Dendritic cell treated with granulocyte-macrophage colony-stimulating factor and Interleukin-4, amounts not matched to agents 40 ng/mL and 50 ng/mL, for 4 days (primary cell): ENCODE measurements at regions of chr12 and their contacts with region 1.

Region 1: GRCh38 chr12:132687208-132688164 is at the starts of genes POLE and PXMP2:
- H3K4me3 Mint-ChIP-seq: peak within 1 kb of the TSS; percentile 85
- H3K27ac Mint-ChIP-seq: peak within 1 kb of the TSS; percentile 78
- H3K4me1 Mint-ChIP-seq: peaks cover 22% of the 10 kb centered on the region
- H3K27me3 Mint-ChIP-seq: peaks cover 8% of the 10 kb centered on the region

Region 2: DNA sequence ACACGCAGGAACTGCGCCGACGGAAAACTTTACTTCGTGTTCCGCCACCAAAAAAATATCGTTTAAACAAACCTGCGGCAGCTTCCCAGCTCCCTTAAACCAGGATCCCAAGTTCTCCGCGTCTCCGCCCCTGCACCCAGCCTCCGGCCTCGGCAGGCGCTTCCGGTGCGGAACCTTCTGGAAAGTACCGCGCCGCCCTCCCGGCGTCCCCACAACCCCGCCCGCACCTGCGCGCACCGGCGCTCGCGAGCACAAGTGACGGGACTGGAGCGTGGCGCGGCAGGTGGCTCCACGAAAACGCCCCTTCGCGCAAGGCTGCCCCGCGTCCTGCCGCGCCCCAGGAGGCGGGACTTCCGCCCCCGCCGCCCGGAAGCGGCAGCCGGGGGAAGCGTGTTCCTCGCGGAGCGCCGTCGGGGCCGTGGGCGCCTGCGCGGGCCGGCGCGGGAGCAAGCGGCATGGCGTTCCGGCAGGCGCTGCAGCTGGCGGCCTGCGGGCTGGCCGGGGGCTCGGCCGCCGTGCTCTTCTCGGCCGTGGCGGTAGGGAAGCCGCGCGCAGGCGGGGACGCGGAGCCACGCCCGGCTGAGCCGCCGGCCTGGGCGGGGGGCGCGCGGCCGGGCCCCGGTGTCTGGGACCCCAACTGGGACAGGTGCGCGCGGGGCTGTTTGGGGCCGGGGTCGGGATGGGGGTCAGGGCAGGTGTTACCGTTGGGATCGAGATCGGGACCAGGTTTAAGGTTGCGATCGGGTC is 23.1 kb after region 1 on chr12 and contains the start of gene PGAM5:
- intact Hi-C with region 1: loop called (anchors 2 kb)
- H3K4me3 Mint-ChIP-seq: peak within 1 kb of the TSS; percentile 94
- H3K27ac Mint-ChIP-seq: peak within 1 kb of the TSS; percentile 87
- H3K4me1 Mint-ChIP-seq: peaks cover 23% of the 10 kb centered on the region
- H3K27me3 Mint-ChIP-seq: no peaks in the 10 kb centered on the region

Region 3: GRCh38 chr12:132739600-132740312 is 52.3 kb after region 1 on chr12:
- intact Hi-C with region 1: no loop called
- H3K4me3 Mint-ChIP-seq: no peak overlapping the region
- H3K27ac Mint-ChIP-seq: no peak overlapping the region
- H3K4me1 Mint-ChIP-seq: no peaks in the 10 kb centered on the region
- H3K27me3 Mint-ChIP-seq: no peaks in the 10 kb centered on the region

Region 4: DNA sequence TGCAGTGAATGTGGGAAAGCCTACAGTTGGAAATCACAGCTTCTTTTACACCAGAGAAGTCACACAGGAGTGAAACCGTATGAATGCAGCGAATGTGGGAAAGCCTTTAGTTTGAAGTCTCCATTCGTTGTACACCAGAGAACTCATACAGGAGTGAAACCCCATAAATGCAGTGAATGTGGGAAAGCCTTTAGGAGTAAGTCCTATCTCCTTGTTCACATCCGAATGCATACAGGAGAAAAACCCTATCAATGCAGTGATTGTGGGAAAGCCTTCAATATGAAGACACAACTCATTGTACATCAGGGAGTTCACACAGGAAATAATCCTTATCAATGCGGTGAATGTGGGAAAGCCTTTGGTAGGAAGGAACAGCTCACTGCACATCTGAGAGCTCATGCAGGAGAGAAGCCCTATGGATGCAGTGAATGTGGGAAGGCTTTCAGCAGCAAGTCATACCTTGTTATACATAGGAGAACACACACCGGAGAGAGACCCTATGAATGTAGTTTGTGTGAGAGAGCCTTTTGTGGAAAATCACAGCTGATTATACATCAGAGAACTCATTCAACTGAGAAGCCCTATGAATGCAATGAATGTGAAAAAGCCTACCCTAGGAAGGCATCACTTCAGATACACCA is 323.3 kb after region 1 on chr12:
- intact Hi-C with region 1: no loop called
- H3K4me3 Mint-ChIP-seq: no peak overlapping the region
- H3K27ac Mint-ChIP-seq: no peak overlapping the region
- H3K4me1 Mint-ChIP-seq: no peaks in the 10 kb centered on the region
- H3K27me3 Mint-ChIP-seq: no peaks in the 10 kb centered on the region